ENCODE measurements at regions of chr9 and their contacts with region 1.

Region 1: GRCh38 chr9:129884220-129885017 is 49.2 kb downstream of the USP20 start:
- DNase-seq: peak; percentile 93 to 97 (median 95)
- H3K4me3 ChIP-seq: peak overlapping the region; percentile 73
- H3K4me3 Mint-ChIP-seq: peak overlapping the region; percentile 83 to 96 (median 89)
- H3K27ac ChIP-seq: peak overlapping the region; percentile 91
- H3K27ac Mint-ChIP-seq: peak overlapping the region; percentile 97 to 100 (median 100)
- H3K4me1 ChIP-seq: peaks cover 45% of the 10 kb centered on the region
- H3K4me1 Mint-ChIP-seq: peaks cover 50 to 69% (median 59%) of the 10 kb centered on the region in 3 donors
- H3K27me3 ChIP-seq: no peaks in the 10 kb centered on the region
- H3K27me3 Mint-ChIP-seq: peaks cover 0 to 17% of the 10 kb centered on the region in 2 donors

Region 2: GRCh38 chr9:129712634-129713401 is 171.6 kb before region 1 on chr9:
- CTCF ChIA-PET with region 1: no interaction called
- POLR2A ChIA-PET with region 1: no interaction called
- DNase-seq: no peak
- H3K4me3 ChIP-seq: no peak overlapping the region
- H3K4me3 Mint-ChIP-seq: no peak overlapping the region
- H3K27ac ChIP-seq: no peak overlapping the region
- H3K27ac Mint-ChIP-seq: peak overlapping the region in 1 of 8 donors; percentile 72
- H3K4me1 ChIP-seq: peaks cover 18% of the 10 kb centered on the region
- H3K4me1 Mint-ChIP-seq: peaks cover 4 to 14% (median 12%) of the 10 kb centered on the region in 3 donors
- H3K27me3 ChIP-seq: no peaks in the 10 kb centered on the region
- H3K27me3 Mint-ChIP-seq: peaks cover 6 to 21% of the 10 kb centered on the region in 2 donors

Region 3: GRCh38 chr9:129802851-129803675 is 81.4 kb before region 1 on chr9 and contains the start of gene TOR1B:
- CTCF ChIA-PET with region 1: interaction called, 10 read pairs
- POLR2A ChIA-PET with region 1: no interaction called
- DNase-seq: peak; percentile 90 to 97 (median 95)
- H3K4me3 ChIP-seq: peak within 1 kb of the TSS; percentile 72
- H3K4me3 Mint-ChIP-seq: peak within 1 kb of the TSS; percentile 91 to 99 (median 95)
- H3K27ac ChIP-seq: peak within 1 kb of the TSS; percentile 72
- H3K27ac Mint-ChIP-seq: peak within 1 kb of the TSS; percentile 91 to 99 (median 94)
- H3K4me1 ChIP-seq: peaks cover 17% of the 10 kb centered on the region
- H3K4me1 Mint-ChIP-seq: peaks cover 22 to 36% (median 28%) of the 10 kb centered on the region in 3 donors
- H3K27me3 ChIP-seq: no peaks in the 10 kb centered on the region
- H3K27me3 Mint-ChIP-seq: no peaks in the 10 kb centered on the region
- total RNA-seq, gene TOR1B: 24.6 to 27.1 TPM

Region 4: GRCh38 chr9:129835021-129835871 is 49.2 kb before region 1 on chr9 and contains the starts of genes C9orf78 and USP20:
- CTCF ChIA-PET with region 1: interaction called, 7 read pairs
- POLR2A ChIA-PET with region 1: interaction called, 15 read pairs
- DNase-seq: peak; percentile 95 to 98 (median 98)
- H3K4me3 ChIP-seq: peak within 1 kb of the TSS; percentile 94
- H3K4me3 Mint-ChIP-seq: peak within 1 kb of the TSS; percentile 96 to 100 (median 99)
- H3K27ac ChIP-seq: peak within 1 kb of the TSS; percentile 93
- H3K27ac Mint-ChIP-seq: peak within 1 kb of the TSS; percentile 95 to 100 (median 99)
- H3K4me1 ChIP-seq: peaks cover 54% of the 10 kb centered on the region
- H3K4me1 Mint-ChIP-seq: peaks cover 52 to 65% (median 63%) of the 10 kb centered on the region in 3 donors
- H3K27me3 ChIP-seq: no peaks in the 10 kb centered on the region
- H3K27me3 Mint-ChIP-seq: no peaks in the 10 kb centered on the region
- total RNA-seq, gene C9orf78: 71.4 to 76.4 TPM
- total RNA-seq, gene USP20: 50.2 to 50.8 TPM

Region 5: GRCh38 chr9:129868916-129869486 is 15.4 kb before region 1 on chr9:
- CTCF ChIA-PET with region 1: interaction called, 9 read pairs
- POLR2A ChIA-PET with region 1: interaction called, 11 read pairs
- DNase-seq: peak; percentile 84 to 97 (median 95)
- H3K4me3 ChIP-seq: peak overlapping the region; percentile 62
- H3K4me3 Mint-ChIP-seq: peak overlapping the region; percentile 44 to 84 (median 71)
- H3K27ac ChIP-seq: peak overlapping the region; percentile 87
- H3K27ac Mint-ChIP-seq: peak overlapping the region; percentile 92 to 99 (median 96)
- H3K4me1 ChIP-seq: peaks cover 82% of the 10 kb centered on the region
- H3K4me1 Mint-ChIP-seq: peaks cover 60 to 90% (median 80%) of the 10 kb centered on the region in 3 donors
- H3K27me3 ChIP-seq: no peaks in the 10 kb centered on the region
- H3K27me3 Mint-ChIP-seq: no peaks in the 10 kb centered on the region

Region 6: DNA sequence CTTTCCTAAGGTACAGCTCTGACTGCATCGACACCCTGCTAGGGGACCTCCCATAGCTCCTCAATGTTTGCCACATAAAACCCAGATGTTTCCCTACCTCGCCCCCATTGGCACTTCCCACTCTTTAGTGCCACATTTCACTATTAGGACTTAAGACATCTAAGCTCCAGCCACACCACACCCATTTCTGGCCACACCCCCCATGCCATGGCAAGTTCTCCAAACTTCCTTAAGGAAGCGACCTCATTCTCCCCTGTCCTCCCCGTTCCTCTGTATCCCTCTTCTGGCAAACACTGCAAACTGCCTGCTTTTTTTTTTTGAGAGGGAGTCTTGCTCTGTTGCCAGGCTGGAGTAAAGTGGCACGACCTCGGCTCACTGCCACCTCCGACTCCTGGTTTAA is 13.8 kb after region 1 on chr9:
- CTCF ChIA-PET with region 1: interaction called, 17 read pairs
- POLR2A ChIA-PET with region 1: interaction called, 11 read pairs
- DNase-seq: no peak
- H3K4me3 ChIP-seq: no peak overlapping the region
- H3K4me3 Mint-ChIP-seq: peak overlapping the region in 1 of 7 donors; percentile 1
- H3K27ac ChIP-seq: no peak overlapping the region
- H3K27ac Mint-ChIP-seq: peak overlapping the region; percentile 66 to 99 (median 78)
- H3K4me1 ChIP-seq: peaks cover 30% of the 10 kb centered on the region
- H3K4me1 Mint-ChIP-seq: peaks cover 31 to 48% (median 44%) of the 10 kb centered on the region in 3 donors
- H3K27me3 ChIP-seq: no peaks in the 10 kb centered on the region
- H3K27me3 Mint-ChIP-seq: peaks cover 0 to 9% of the 10 kb centered on the region in 2 donors